Tibial artery (tissue), 4 donors: ENCODE measurements at regions of chr11 and their contacts with region 1.

Region 1: GRCh38 chr11:107577346-107577711 is 11.8 kb upstream of the ALKBH8 start:
- DNase-seq: no peak
- H3K4me3 ChIP-seq: no peak overlapping the region
- H3K27ac ChIP-seq: no peak overlapping the region
- H3K4me1 ChIP-seq: no peaks in the 10 kb centered on the region
- H3K27me3 ChIP-seq: peaks cover 0 to 5% of the 10 kb centered on the region in 2 donors
- CTCF ChIP-seq: no peak

Region 2: GRCh38 chr11:107482234-107482633 is 95.1 kb before region 1 on chr11:
- intact Hi-C with region 1: no loop called
- DNase-seq: no peak
- H3K4me3 ChIP-seq: no peak overlapping the region
- H3K27ac ChIP-seq: no peak overlapping the region
- H3K4me1 ChIP-seq: no peaks in the 10 kb centered on the region
- H3K27me3 ChIP-seq: peaks cover 0 to under 1% of the 10 kb centered on the region in 2 donors
- CTCF ChIP-seq: no peak

Region 3: DNA sequence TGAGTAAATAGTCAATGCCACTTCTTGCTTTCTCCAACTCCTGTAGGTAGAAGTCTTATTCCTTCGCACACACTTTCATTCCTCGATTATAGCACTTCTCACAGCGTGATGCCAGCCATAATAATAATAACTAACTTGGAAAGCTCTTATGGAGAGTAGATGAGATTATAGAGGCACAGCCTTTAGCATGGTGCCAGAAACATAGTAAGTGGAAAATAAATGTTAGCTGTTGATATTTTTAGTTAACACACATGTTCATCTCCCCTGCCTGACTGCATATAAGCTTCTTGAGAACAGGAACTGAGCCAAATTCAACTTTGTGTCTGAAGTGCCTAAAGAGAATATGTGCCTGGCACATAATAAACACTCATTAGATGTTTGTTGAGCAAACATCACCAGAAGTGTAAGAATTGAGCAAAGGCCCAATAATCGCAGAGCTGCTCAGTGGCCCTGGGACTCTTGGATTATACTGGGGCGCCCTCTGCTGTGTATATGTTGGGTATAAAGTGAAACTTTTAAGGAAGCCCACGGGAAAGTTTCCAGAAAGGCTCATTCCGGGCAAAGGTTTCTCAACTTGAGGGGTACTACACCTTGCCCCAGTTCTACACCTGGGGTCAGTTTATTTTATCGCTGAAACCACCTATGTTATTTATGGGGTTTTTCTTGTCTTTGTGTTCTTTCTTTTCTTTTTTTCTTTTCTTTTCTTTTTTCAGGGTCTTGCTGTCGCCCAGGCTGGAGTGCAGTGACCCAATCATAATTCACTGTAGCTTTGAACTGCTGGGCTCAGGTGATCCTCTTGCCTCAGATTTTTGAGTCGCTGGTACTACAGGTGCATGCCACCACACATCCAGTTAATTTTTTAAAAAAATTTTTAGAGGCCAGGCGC is 112.2 kb after region 1 on chr11:
- intact Hi-C with region 1: loop called (anchors 5 kb)
- DNase-seq: peak in 1 of 2 donors; percentile 83
- H3K4me3 ChIP-seq: no peak overlapping the region
- H3K27ac ChIP-seq: no peak overlapping the region
- H3K4me1 ChIP-seq: peaks cover 0 to 15% (median 4%) of the 10 kb centered on the region in 4 donors
- H3K27me3 ChIP-seq: peaks cover 0 to 8% of the 10 kb centered on the region in 2 donors
- CTCF ChIP-seq: peak; percentile 57 to 58

Region 4: DNA sequence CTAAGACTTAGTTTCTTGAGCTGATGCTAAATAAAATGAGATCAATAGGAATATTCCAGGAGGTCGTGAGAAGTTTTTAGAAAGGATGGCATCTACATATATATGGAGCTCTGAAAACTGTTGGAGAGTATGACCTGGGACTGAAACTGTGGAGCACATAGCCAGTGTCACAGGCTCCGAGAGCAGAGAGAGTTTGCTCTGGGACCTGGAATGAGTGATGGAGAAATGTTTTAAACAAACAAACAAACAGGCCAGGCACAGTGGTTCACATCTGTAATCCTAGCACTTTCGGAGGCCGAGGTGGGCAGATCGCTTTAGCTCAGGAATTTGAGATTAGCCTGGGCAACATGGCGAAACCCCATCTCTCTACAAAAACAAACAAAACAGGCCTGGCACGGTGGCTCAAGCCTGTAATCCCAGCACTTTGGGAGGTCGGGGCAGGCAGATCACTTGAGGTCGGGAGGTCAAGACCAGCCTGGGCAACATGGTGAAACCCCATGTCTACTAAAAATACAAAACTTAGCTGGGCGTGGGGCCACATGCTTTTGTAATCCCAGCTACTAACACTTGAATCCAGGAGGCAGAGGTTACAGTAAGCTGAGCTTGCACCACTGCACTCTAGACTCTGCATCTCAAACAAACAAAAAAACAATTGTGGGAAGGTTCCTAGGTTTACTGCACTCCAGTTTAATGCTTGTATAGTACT is 214.2 kb after region 1 on chr11:
- intact Hi-C with region 1: no loop called
- DNase-seq: no peak
- H3K4me3 ChIP-seq: no peak overlapping the region
- H3K27ac ChIP-seq: no peak overlapping the region
- H3K4me1 ChIP-seq: no peaks in the 10 kb centered on the region
- H3K27me3 ChIP-seq: no peaks in the 10 kb centered on the region
- CTCF ChIP-seq: no peak